ENCODE measurements at regions of chr4 and their contacts with region 1.

Region 1: GRCh38 chr4:73922766-73923630 is 53.8 kb downstream of the CXCL1 start:
- DNase-seq: peak in 1 of 2 experiments; percentile 12
- H3K4me3 ChIP-seq: no peak overlapping the region
- H3K4me3 Mint-ChIP-seq: no peak overlapping the region
- H3K27ac Mint-ChIP-seq: no peak overlapping the region
- H3K4me1 ChIP-seq: no peaks in the 10 kb centered on the region
- H3K4me1 Mint-ChIP-seq: peaks cover 5% of the 10 kb centered on the region
- H3K27me3 ChIP-seq: no peaks in the 10 kb centered on the region
- H3K27me3 Mint-ChIP-seq: peaks cover 3% of the 10 kb centered on the region
- CTCF ChIP-seq: peak; percentile 7 to 33

Region 2: DNA sequence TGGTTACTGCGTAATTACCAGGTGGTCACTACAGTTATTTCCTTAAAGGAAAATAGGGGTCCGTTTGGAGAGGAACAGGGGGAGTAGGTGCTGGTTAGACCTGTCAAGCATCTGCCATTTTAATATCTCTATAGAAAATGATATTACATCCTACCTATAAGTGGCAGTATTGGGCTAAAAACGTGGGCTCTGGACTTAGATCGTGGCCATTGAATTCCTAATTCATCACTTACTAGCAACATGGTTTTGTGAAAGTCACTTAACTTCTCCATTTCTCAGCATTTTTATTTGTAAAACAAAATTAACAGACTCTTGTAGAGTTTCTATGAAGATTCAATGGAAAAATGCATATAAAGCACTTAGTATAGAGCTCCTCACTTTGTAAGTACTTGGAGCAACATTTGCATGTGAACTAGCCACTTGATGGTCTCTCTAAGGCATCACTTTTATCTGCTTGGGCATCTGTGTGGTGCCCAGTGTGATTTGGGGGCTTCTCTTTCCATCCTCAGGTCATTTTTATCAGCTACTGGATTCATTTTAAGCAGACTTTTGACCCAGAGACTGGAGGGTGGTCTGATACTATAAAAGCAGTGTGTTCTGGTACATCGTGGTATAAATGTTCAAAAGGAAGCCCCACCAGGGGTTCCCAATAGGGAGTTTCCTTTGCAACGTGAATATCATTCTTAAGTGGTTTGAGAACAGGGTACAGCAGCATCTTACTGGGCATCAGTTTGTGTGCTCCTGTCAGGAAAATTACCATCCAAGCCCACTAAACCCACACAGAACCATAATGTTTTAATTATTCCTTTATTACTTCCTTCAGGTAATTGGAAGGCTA is 260.1 kb before region 1 on chr4:
- CTCF ChIA-PET with region 1: no interaction called
- POLR2A ChIA-PET with region 1: no interaction called
- intact Hi-C with region 1: loop called (anchors 5 kb)
- DNase-seq: no peak
- H3K4me3 ChIP-seq: no peak overlapping the region
- H3K4me3 Mint-ChIP-seq: no peak overlapping the region
- H3K27ac Mint-ChIP-seq: no peak overlapping the region
- H3K4me1 ChIP-seq: no peaks in the 10 kb centered on the region
- H3K4me1 Mint-ChIP-seq: no peaks in the 10 kb centered on the region
- H3K27me3 ChIP-seq: no peaks in the 10 kb centered on the region
- H3K27me3 Mint-ChIP-seq: no peaks in the 10 kb centered on the region
- CTCF ChIP-seq: peak in 1 of 2 experiments; percentile 19

Region 3: GRCh38 chr4:73729534-73730165 is 193.3 kb before region 1 on chr4:
- CTCF ChIA-PET with region 1: no interaction called
- POLR2A ChIA-PET with region 1: no interaction called
- intact Hi-C with region 1: loop called (anchors 1 kb)
- DNase-seq: peak; percentile 57 to 63
- H3K4me3 ChIP-seq: no peak overlapping the region
- H3K4me3 Mint-ChIP-seq: no peak overlapping the region
- H3K27ac Mint-ChIP-seq: no peak overlapping the region
- H3K4me1 ChIP-seq: no peaks in the 10 kb centered on the region; the same call in 1 of the 2 replicates
- H3K4me1 Mint-ChIP-seq: no peaks in the 10 kb centered on the region
- H3K27me3 ChIP-seq: no peaks in the 10 kb centered on the region
- H3K27me3 Mint-ChIP-seq: no peaks in the 10 kb centered on the region
- CTCF ChIP-seq: peak; percentile 79 to 84

Region 4: GRCh38 chr4:73869130-73870050 is 53.6 kb before region 1 on chr4 and contains the start of gene CXCL1:
- CTCF ChIA-PET with region 1: no interaction called
- POLR2A ChIA-PET with region 1: no interaction called
- intact Hi-C with region 1: loop called (anchors 1 kb)
- DNase-seq: peak; percentile 21 to 39
- H3K4me3 ChIP-seq: peak within 1 kb of the TSS; percentile 46
- H3K4me3 Mint-ChIP-seq: peak within 1 kb of the TSS; percentile 91
- H3K27ac Mint-ChIP-seq: peak within 1 kb of the TSS; percentile 61
- H3K4me1 ChIP-seq: no peaks in the 10 kb centered on the region; the same call in 1 of the 2 replicates
- H3K4me1 Mint-ChIP-seq: no peaks in the 10 kb centered on the region
- H3K27me3 ChIP-seq: no peaks in the 10 kb centered on the region
- H3K27me3 Mint-ChIP-seq: peaks cover 7% of the 10 kb centered on the region
- CTCF ChIP-seq: no peak
- total RNA-seq, gene CXCL1: 0.79 TPM in 1 of 2 replicates, not detected in the other

Measured in Caco-2 (cell line).